Mammary epithelial cell (primary cell): ENCODE measurements at regions of chr7 and their contacts with region 1.

Region 1: DNA sequence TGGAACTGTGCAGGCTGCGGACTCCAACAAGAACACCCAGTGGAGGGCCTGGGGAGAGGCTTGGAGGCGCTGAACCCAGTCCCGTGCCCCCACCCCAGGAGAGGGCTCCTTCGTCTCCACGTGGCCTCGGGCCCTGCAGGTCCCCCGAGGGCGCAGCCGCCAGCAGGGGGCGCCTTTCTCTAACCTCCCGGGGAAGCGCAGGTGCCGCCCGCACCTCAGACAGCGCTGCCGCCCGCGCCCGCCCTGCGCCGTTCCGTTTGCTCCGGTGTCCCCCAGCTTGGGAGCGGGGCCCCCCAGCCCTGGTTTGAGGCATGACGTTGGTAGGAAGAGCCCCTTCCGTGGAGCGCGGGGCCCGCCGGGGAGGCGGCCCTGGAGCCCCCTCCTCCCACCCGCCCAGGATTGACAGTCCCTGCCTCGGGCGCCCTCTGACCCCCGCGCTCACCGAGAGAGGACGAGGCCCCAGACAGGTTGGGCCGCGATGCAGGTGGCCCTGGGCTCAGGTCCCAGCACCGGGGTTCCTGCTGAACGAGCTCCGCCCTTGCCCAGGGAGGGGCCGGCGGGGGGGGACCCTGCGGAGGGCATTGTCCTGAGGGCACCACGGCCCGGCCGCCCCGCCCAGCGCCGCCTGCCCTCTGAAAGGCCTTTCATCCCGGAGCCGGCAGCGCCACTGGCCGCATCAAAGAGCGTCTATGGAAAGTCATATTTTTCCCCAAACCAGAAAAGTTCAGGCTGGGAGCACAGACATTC is 42.8 kb downstream of the FOXL3 start:
- DNase-seq: peak; percentile 38
- H3K4me3 ChIP-seq: peak overlapping the region; percentile 28 to 40 (median 28)
- H3K27ac ChIP-seq: no peak overlapping the region
- H3K4me1 ChIP-seq: peaks cover 15% of the 10 kb centered on the region
- H3K27me3 ChIP-seq: peaks cover 2% of the 10 kb centered on the region
- CTCF ChIP-seq: peak; percentile 42 to 92

Region 2: DNA sequence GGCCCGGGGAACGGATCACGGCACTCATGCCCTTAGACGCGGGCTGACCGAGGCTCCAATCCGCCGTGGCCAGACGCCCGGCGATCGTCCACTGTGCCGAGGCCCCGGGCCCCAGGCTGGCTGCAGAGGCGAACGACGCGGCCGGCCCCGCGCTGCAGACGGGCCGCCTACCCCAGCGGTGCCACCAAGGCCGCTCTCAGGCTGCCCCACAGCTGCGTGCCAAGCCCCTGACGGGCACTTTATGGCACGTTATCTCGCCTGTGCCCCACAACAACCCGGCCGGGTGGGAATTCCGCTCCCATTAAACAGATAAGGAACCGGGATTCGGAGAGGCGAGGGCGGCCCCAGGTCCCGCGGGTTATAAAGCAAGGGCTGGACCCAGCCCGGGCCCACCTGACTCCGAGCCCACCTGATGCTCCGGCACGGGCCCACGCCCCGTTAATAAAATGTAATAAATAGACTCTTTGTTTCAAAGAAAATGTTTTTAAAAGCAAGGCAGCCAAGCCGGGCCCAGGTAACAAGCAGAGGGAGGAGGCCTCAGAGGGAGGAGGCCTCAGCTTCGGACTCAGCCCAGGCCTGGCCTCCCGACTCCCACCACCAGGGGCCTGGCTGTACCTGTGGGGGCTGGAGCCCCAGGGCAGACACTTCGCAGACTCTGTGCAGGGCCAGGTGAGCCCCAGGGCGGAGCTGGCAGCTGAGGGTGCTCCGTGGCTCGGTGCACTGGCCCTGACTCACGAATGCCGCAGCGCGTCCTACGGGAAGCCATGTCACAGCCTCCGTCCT is 36.8 kb after region 1 on chr7:
- CTCF ChIA-PET with region 1: no interaction called
- dilution Hi-C with region 1: no loop called
- in situ Hi-C with region 1: no loop called
- intact Hi-C with region 1: loop called (anchors 2 kb)
- DNase-seq: peak; percentile 78
- H3K4me3 ChIP-seq: peak overlapping the region in 2 of 3 experiments; percentile 4 to 36
- H3K27ac ChIP-seq: peak overlapping the region; percentile 69
- H3K4me1 ChIP-seq: peaks cover 43% of the 10 kb centered on the region
- H3K27me3 ChIP-seq: no peaks in the 10 kb centered on the region
- CTCF ChIP-seq: peak; percentile 38 to 48

Region 3: GRCh38 chr7:388023-388960 is 55.5 kb after region 1 on chr7:
- CTCF ChIA-PET with region 1: no interaction called
- dilution Hi-C with region 1: no loop called
- in situ Hi-C with region 1: no loop called
- intact Hi-C with region 1: no loop called
- DNase-seq: no peak
- H3K4me3 ChIP-seq: no peak overlapping the region
- H3K27ac ChIP-seq: no peak overlapping the region
- H3K4me1 ChIP-seq: peaks cover 17% of the 10 kb centered on the region
- H3K27me3 ChIP-seq: no peaks in the 10 kb centered on the region
- CTCF ChIP-seq: no peak

Region 4: DNA sequence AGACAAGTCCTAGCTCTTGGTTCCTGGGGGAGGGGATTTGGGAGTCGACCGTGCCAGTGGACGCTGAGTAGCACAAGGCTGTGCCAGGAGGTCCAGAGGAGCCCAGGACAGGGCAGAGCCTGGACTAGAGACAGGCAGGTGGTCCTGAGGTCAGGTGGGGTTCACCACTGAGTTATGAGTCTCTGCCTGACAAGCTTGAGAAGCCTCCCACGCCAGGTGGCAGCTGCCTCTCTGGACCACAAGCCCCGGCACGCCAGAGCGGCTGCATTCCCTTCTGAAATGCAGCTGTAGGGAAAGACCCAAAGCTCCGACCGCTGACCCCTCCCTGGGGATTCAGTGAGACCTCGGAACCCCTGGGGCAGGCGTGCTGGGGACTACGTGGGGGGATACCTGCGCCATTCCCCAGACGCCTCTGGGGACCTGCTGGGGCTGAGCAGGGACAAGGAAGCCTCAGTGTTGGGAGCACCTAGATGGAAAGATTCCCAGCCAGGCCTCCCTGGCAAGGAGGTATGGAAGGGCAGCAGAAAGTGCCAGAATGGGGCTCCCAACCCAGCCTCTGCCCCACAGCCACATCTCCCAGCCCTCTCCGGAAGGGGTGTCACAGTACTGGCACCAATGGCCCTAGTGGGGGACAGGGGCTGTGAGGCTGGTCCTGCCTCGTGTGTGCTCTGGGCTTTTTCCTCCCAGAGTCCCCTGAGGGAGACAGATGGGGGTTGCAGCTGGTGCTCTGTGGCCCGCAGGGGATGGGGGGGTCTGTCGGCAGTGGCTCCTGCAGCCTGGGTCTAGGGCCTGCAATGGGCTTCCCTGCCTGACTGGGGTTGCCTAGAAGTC is 157.9 kb after region 1 on chr7:
- CTCF ChIA-PET with region 1: interaction called, 5 read pairs
- dilution Hi-C with region 1: loop called (anchors 5 kb)
- in situ Hi-C with region 1: no loop called
- intact Hi-C with region 1: no loop called
- DNase-seq: peak; percentile 70
- H3K4me3 ChIP-seq: no peak overlapping the region
- H3K27ac ChIP-seq: no peak overlapping the region
- H3K4me1 ChIP-seq: peaks cover 31% of the 10 kb centered on the region
- H3K27me3 ChIP-seq: no peaks in the 10 kb centered on the region
- CTCF ChIP-seq: no peak

Region 5: GRCh38 chr7:513521-514166 is 180.8 kb after region 1 on chr7:
- CTCF ChIA-PET with region 1: interaction called, 24 read pairs
- dilution Hi-C with region 1: no loop called
- in situ Hi-C with region 1: loop called in 1 of 2 experiments (anchors 10 kb)
- intact Hi-C with region 1: loop called (anchors 1 kb)
- DNase-seq: peak; percentile 55
- H3K4me3 ChIP-seq: peak overlapping the region in 1 of 3 experiments; percentile 7
- H3K27ac ChIP-seq: peak overlapping the region; percentile 44
- H3K4me1 ChIP-seq: peaks cover 50% of the 10 kb centered on the region
- H3K27me3 ChIP-seq: no peaks in the 10 kb centered on the region
- CTCF ChIP-seq: peak in 1 of 2 donors; percentile 36

Region 6: DNA sequence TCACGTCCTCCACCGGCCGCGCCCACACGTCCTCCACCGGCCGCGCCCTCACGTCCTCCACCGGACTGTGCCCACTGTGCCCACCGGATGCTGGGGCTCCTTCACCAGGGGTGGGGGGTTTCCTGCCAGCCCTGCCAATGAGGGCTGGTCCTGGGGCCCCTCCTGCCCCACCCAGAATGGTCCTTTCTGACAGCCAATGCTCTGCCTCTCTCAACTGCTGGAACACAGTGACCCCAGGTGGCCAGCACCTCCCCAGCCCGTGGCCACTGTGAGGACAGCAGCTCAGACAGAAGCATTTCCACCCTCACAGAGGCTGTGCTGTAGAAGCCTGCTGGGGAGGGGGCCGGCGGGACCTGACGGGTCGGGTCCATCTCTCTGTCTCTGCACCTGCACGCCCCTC is 303.6 kb after region 1 on chr7:
- CTCF ChIA-PET with region 1: no interaction called
- dilution Hi-C with region 1: no loop called
- in situ Hi-C with region 1: loop called in 1 of 2 experiments (anchors 10 kb)
- intact Hi-C with region 1: loop called (anchors 2 kb)
- DNase-seq: no peak
- H3K4me3 ChIP-seq: no peak overlapping the region
- H3K27ac ChIP-seq: no peak overlapping the region
- H3K4me1 ChIP-seq: no peaks in the 10 kb centered on the region
- H3K27me3 ChIP-seq: no peaks in the 10 kb centered on the region
- CTCF ChIP-seq: peak in 1 of 2 donors; percentile 32

Region 7: GRCh38 chr7:774161-775109 is 441.6 kb after region 1 on chr7:
- CTCF ChIA-PET with region 1: no interaction called
- dilution Hi-C with region 1: no loop called
- in situ Hi-C with region 1: no loop called
- intact Hi-C with region 1: loop called (anchors 1 kb)
- DNase-seq: peak; percentile 36
- H3K4me3 ChIP-seq: no peak overlapping the region
- H3K27ac ChIP-seq: no peak overlapping the region
- H3K4me1 ChIP-seq: no peaks in the 10 kb centered on the region
- H3K27me3 ChIP-seq: no peaks in the 10 kb centered on the region
- CTCF ChIP-seq: peak; percentile 91 to 95